ENCODE measurements at regions of chr19 and their contacts with region 1.

Region 1: GRCh38 chr19:11798391-11799330 is at the start of gene ZNF491:
- DNase-seq: peak; percentile 87
- ATAC-seq: peak; percentile 98
- H3K4me3 ChIP-seq: peak within 1 kb of the TSS; percentile 53 to 76 (median 61)
- H3K4me3 Mint-ChIP-seq: peak within 1 kb of the TSS; percentile 93
- H3K27ac ChIP-seq: peak within 1 kb of the TSS; percentile 2 to 52
- H3K27ac Mint-ChIP-seq: peak within 1 kb of the TSS; percentile 74
- H3K4me1 ChIP-seq: peaks cover 14 to 17% of the 10 kb centered on the region in 2 donors
- H3K4me1 Mint-ChIP-seq: peaks cover 21% of the 10 kb centered on the region
- H3K27me3 ChIP-seq: no peaks in the 10 kb centered on the region
- H3K27me3 Mint-ChIP-seq: no peaks in the 10 kb centered on the region
- CTCF ChIP-seq: no peak
- total RNA-seq, gene ZNF491: 1.7 and 2.4 TPM in 2 replicates

Region 2: GRCh38 chr19:11505032-11505503 is 293.6 kb before region 1 on chr19:
- CTCF ChIA-PET with region 1: no interaction called
- POLR2A ChIA-PET with region 1: no interaction called
- intact Hi-C with region 1: no loop called
- DNase-seq: peak; percentile 97
- ATAC-seq: peak; percentile 90
- H3K4me3 ChIP-seq: peak overlapping the region in 4 of 5 experiments; percentile 62 to 98 (median 82)
- H3K4me3 Mint-ChIP-seq: peak overlapping the region; percentile 87
- H3K27ac ChIP-seq: peak overlapping the region; percentile 65 to 98
- H3K27ac Mint-ChIP-seq: peak overlapping the region; percentile 93
- H3K4me1 ChIP-seq: peaks cover 9 to 13% of the 10 kb centered on the region in 2 donors
- H3K4me1 Mint-ChIP-seq: peaks cover 13% of the 10 kb centered on the region
- H3K27me3 ChIP-seq: no peaks in the 10 kb centered on the region
- H3K27me3 Mint-ChIP-seq: no peaks in the 10 kb centered on the region
- CTCF ChIP-seq: no peak

Region 3: DNA sequence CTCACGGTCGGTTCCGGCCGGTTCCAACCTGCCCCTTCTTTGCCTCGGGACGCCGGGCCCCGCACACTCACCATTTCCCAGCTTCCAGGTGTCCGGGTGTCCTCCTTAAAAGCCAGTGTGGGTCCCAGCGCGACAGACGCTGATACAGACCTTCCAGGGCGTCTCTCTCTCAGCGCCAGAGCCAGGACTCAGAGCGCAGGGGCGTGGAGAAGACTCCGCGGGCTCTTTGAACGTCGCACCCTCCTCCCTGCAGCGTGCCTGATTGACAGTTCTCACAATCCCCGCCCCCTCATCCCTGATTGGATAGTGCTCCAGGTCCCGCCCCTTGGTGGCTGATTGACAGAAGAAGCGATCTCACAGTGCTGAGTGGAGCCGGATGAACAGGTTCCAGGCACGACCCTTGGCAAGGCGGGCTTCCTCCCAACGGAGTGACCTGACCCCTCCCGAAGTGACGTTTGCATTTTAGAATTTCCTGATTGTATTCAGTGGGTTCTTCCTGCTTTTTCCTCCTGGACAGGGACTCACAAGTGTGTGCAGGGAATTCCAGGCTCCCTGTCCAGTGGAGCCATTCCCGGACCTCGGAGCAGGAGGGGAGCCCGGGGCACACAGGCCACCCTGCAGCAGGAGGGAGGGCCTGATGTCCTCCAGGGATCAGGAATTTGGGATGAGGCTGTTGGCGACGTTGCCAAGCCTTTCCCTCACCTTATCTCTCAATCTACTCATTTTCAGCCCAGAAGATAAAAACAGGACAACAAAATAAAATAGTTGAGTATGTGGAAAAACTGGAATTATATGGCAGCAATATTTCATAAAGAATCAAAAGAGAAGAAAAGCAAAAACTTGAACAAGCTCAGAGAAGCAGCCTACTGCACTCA is 59.7 kb before region 1 on chr19 and contains the start of gene ZNF823:
- CTCF ChIA-PET with region 1: interaction called, 3 read pairs
- POLR2A ChIA-PET with region 1: no interaction called
- intact Hi-C with region 1: loop called (anchors 5 kb)
- DNase-seq: peak; percentile 94
- ATAC-seq: peak; percentile 99
- H3K4me3 ChIP-seq: peak within 1 kb of the TSS; percentile 36 to 92 (median 83)
- H3K4me3 Mint-ChIP-seq: peak within 1 kb of the TSS; percentile 99
- H3K27ac ChIP-seq: peak within 1 kb of the TSS in 1 of 2 donors; percentile 38
- H3K27ac Mint-ChIP-seq: peak within 1 kb of the TSS; percentile 89
- H3K4me1 ChIP-seq: peaks cover 15 to 19% of the 10 kb centered on the region in 2 donors
- H3K4me1 Mint-ChIP-seq: peaks cover 26% of the 10 kb centered on the region
- H3K27me3 ChIP-seq: no peaks in the 10 kb centered on the region
- H3K27me3 Mint-ChIP-seq: peaks cover 5% of the 10 kb centered on the region
- CTCF ChIP-seq: no peak
- total RNA-seq, gene ZNF823: 4.2 and 5.1 TPM in 2 replicates

Region 4: DNA sequence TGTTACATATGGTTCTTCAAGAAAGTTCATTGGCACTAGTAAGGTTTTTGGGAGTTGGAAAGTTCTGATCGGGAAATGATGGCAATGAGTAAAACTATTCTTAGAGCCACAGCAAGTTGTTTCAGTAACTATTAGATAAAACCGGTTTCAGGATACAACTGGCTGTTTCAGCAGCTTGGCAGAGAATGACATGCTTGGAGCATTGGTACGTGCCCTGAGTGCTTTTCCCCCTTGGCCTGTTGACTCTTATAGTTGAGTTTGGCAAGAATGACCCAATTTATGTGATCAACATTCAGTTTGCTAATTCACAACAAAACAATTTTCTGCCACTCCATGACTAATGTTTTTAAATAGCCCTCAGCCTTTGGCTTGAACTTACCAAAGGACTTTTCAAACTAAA is 11.1 kb before region 1 on chr19:
- CTCF ChIA-PET with region 1: interaction called, 18 read pairs
- POLR2A ChIA-PET with region 1: no interaction called
- intact Hi-C with region 1: no loop called
- DNase-seq: no peak
- ATAC-seq: no peak
- H3K4me3 ChIP-seq: no peak overlapping the region
- H3K4me3 Mint-ChIP-seq: no peak overlapping the region
- H3K27ac ChIP-seq: no peak overlapping the region
- H3K27ac Mint-ChIP-seq: no peak overlapping the region
- H3K4me1 ChIP-seq: no peaks in the 10 kb centered on the region
- H3K4me1 Mint-ChIP-seq: no peaks in the 10 kb centered on the region
- H3K27me3 ChIP-seq: no peaks in the 10 kb centered on the region
- H3K27me3 Mint-ChIP-seq: no peaks in the 10 kb centered on the region
- CTCF ChIP-seq: no peak

Region 5: DNA sequence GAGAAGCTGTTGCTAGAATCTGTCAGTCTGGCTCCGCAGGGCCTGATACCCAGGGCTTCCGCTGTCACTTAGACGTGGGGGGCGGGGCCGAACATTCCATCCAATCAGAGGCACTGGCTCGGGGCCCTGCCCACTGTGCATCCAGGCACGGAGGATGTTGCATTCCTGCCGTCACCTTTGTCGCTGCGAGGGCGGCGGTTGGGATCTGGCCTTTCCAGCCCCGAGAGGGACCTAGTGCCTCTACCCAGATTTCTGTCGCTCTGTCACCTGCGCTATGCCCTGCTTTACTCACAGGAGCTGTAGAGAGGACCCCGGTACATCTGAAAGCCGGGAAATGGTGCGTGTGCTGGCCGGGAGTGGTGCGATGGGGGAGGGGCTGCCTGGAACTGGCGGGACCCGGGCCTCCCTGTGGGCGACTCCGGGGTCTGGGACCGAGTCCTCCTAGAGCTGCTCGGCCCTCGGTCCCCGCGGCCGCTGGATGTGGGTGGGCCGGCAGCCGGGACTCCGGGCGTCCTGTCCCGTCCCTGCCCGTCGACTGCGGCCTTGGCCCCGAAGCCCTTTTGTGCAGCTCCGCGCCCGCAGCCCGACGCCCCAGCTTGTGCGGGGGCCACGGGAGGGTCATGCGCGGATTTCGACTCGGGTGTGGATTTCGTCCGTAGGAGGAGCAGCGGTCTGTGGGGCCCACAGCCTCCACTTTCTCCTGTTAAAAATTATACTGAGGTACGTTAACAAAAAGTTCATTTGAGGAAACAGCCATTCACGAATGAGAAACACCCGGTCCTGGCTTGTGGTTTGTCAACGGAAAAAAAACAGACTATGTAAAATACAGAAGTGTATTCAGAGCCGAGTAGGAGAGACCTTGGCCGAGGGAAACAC is 50.2 kb after region 1 on chr19 and contains the start of gene ZNF439:
- CTCF ChIA-PET with region 1: interaction called, 3 read pairs
- POLR2A ChIA-PET with region 1: no interaction called
- intact Hi-C with region 1: loop called (anchors 2 kb)
- DNase-seq: peak; percentile 93
- ATAC-seq: peak; percentile 97
- H3K4me3 ChIP-seq: peak within 1 kb of the TSS; percentile 57 to 85 (median 83)
- H3K4me3 Mint-ChIP-seq: peak within 1 kb of the TSS; percentile 90
- H3K27ac ChIP-seq: peak within 1 kb of the TSS; percentile 71 to 72
- H3K27ac Mint-ChIP-seq: peak within 1 kb of the TSS; percentile 96
- H3K4me1 ChIP-seq: peaks cover 20 to 24% of the 10 kb centered on the region in 2 donors
- H3K4me1 Mint-ChIP-seq: peaks cover 29% of the 10 kb centered on the region
- H3K27me3 ChIP-seq: no peaks in the 10 kb centered on the region
- H3K27me3 Mint-ChIP-seq: no peaks in the 10 kb centered on the region
- CTCF ChIP-seq: no peak
- total RNA-seq, gene ZNF439: 48.6 and 52.3 TPM in 2 replicates

Region 6: DNA sequence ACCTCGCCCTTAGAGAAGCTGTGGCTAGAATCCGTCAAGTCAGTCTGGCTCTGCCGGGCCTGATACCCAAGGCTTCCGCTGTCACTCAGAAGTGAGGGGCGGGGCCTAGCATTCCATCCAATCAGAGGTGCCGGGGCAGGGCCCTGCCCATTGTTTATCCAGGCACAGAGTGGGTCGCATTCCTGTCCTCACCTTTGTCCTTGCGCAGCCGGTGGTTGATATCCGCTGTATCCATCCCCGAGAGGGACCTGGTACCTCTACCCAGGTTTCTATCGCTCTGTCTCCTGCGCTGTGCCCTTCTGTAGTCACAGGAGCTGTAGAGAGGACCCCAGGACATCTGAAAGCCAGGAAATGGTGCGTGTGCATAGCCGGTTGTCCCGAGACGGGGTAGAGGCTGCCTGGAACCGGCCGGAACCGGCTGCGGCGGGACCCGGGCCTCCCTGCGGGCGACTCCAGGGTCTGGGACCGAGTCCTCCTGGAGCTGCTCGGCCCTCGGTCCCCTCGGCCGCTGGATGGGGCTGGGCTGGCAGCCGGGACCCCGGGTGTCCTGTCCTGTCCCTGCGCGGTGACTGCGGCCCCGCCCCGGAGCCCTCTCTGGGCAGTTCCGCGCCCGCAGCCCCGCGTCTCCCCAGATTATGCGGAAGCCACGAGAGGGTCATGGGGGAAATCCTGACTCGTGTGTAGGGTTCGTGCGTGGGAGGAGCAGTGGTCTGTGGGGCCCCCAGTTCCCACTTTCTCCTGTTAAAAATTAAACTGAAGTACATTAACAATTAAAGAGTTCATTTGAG is 166.4 kb after region 1 on chr19 and contains the start of gene ZNF763:
- CTCF ChIA-PET with region 1: interaction called, 16 read pairs
- POLR2A ChIA-PET with region 1: no interaction called
- intact Hi-C with region 1: loop called (anchors 1 kb)
- DNase-seq: peak; percentile 95
- ATAC-seq: peak; percentile 91
- H3K4me3 ChIP-seq: peak within 1 kb of the TSS; percentile 76 to 97 (median 89)
- H3K4me3 Mint-ChIP-seq: peak within 1 kb of the TSS; percentile 99
- H3K27ac ChIP-seq: peak within 1 kb of the TSS; percentile 99
- H3K27ac Mint-ChIP-seq: peak within 1 kb of the TSS; percentile 99
- H3K4me1 ChIP-seq: peaks cover 14 to 20% of the 10 kb centered on the region in 2 donors
- H3K4me1 Mint-ChIP-seq: peaks cover 27% of the 10 kb centered on the region
- H3K27me3 ChIP-seq: no peaks in the 10 kb centered on the region
- H3K27me3 Mint-ChIP-seq: no peaks in the 10 kb centered on the region
- CTCF ChIP-seq: no peak
- total RNA-seq, gene ZNF763: 14.2 and 16.6 TPM in 2 replicates

Region 7: GRCh38 chr19:12064590-12065538 is 266.2 kb after region 1 on chr19 and contains the start of gene ZNF844:
- CTCF ChIA-PET with region 1: interaction called, 6 read pairs
- POLR2A ChIA-PET with region 1: no interaction called
- intact Hi-C with region 1: loop called (anchors 2 kb)
- DNase-seq: peak; percentile 89
- ATAC-seq: peak; percentile 96
- H3K4me3 ChIP-seq: peak within 1 kb of the TSS; percentile 73 to 93 (median 76)
- H3K4me3 Mint-ChIP-seq: peak within 1 kb of the TSS; percentile 95
- H3K27ac ChIP-seq: peak within 1 kb of the TSS; percentile 83 to 87
- H3K27ac Mint-ChIP-seq: peak within 1 kb of the TSS; percentile 94
- H3K4me1 ChIP-seq: peaks cover 6 to 16% of the 10 kb centered on the region in 2 donors
- H3K4me1 Mint-ChIP-seq: peaks cover 11% of the 10 kb centered on the region
- H3K27me3 ChIP-seq: no peaks in the 10 kb centered on the region
- H3K27me3 Mint-ChIP-seq: no peaks in the 10 kb centered on the region
- CTCF ChIP-seq: no peak
- total RNA-seq, gene ZNF844: 33.7 and 36.4 TPM in 2 replicates